ENCODE measurements at regions of chr9 and their contacts with region 1.

Region 1: GRCh38 chr9:26744191-26744965 is 148.2 kb downstream of the CAAP1 start:
- DNase-seq: no peak
- ATAC-seq: no peak

Region 2: DNA sequence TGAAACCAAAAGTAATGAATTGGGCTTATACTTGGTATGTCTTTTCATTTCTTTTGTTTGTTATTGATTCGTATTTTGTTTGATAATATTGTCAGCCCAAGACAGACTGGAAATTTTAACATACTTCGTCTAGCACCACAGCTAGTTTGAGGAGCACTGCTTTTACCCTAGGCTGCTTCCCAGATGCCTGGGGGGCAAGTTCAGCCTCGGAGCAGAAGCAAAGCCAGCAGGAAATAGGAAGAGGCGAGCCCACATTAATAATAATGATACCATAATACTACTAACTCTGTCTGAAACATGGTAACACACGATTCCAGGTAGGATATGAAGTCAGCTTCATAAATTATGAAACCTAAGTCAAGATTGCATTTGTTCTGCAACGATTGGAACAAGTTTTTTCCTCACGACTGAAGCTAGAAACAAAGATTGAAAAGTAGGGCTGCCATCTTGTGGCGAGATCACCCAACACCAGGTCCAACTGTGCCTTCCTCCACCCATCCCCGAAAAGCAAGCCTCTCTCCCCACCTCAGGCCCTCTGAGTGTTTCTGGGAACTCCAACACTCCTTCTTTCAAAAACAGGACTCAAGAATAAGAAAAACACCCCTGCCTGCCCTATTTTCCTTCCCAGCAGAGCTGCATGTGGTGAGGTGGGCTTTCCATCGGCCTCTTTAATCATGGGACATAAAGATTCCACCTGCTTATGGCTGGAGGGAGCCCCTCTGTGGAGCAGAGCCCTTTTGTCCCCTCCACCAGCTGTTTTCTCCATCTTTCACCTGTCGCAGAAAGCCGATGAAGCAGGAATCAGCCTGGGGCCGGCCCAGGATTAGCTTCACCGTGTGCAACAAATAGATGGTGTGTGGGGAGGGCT is 88.1 kb before region 1 on chr9:
- intact Hi-C with region 1: no loop called
- DNase-seq: no peak
- ATAC-seq: no peak

Region 3: DNA sequence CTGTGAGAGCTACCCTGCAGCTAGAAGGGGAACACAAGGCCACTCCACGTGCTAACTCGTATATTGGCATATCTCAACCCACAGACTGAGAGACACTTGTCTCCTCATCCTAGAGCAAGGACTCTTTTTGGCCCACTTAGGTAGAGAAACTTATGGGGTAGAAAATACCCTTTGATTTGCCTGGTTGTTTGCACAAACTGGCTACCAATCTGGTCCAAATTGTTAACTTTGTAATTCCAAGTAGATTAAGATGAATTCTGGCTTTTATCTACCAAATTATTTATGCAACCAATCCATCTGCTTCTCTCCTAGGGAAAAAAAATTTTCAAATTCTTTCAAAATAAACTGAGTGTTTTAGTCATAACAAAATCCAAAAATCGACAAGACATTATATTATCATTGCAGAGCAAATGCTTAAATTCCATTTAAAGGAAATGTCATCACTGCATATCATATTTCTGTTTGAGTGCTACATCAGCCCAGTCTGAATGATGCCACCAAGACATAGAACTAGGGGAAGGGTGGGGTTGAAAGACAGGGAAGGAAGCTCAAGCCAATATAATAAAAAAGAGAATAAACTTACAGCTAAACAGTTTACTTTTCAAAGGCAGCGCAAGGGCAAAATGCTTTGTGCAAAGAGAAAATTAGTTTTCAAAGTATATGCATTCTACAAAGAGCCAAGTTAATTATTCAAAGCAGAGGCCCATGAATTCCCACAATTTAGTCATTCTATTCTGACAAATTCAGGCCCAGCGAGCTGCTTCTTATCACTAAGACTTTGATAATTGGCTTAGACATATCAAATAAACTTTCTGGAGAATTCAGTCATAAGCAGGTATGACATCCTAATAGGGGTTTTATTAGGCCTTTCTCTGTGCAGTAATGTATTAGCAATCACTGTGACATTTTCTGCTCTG is 49.7 kb before region 1 on chr9:
- intact Hi-C with region 1: no loop called
- DNase-seq: no peak
- ATAC-seq: no peak

Region 4: GRCh38 chr9:26975693-26976059 is 231.3 kb after region 1 on chr9:
- intact Hi-C with region 1: loop called (anchors 1 to 10 kb)
- DNase-seq: no peak
- ATAC-seq: peak; percentile 44 to 45

Measured in left cardiac atrium (tissue), 4 donors.